ENCODE measurements at regions of chr17 and their contacts with region 1.

Region 1: DNA sequence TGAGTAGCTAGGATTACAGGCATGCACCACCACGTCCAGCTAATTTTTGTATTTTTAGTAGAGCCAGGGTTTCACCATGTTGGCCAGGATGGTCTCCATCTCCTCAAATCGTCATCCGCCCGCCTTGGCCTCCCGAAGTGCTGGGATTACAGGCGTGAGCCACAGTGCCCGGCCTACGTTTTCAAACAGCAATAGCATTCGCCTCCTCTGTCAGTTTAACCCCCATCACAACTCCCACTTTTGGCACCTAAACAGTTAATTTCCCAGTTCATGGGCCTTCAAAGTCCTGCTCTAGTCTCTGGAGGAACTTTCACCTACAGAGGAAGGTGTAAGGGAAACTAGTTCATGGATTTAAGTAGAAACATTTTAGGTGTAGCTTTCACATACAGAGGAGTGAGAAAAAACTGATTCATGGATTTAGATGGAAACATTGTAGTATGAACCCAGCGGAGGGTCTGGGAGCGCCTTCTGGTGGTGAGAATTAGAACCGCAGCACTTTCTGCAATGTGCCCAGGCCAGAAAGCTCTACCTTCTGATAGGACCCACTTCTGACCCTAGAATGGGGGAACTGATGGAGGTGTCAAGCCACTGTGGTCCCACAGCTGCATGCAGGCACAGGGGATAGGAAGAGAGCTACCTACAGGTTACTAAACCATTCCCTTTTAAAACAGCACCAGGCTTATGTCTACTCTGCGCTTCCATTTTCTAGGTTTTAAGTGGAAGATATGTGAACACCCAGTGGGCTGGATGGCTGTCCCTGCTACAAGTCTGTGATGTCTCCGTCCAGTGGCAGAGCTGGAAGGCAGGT is 12.0 kb upstream of the MEOX1 start:
- DNase-seq: peak; percentile 65
- H3K4me3 ChIP-seq: no peak overlapping the region
- H3K27ac ChIP-seq: no peak overlapping the region
- H3K4me1 ChIP-seq: peaks cover 14% of the 10 kb centered on the region
- CTCF ChIP-seq: peak; percentile 91

Region 2: DNA sequence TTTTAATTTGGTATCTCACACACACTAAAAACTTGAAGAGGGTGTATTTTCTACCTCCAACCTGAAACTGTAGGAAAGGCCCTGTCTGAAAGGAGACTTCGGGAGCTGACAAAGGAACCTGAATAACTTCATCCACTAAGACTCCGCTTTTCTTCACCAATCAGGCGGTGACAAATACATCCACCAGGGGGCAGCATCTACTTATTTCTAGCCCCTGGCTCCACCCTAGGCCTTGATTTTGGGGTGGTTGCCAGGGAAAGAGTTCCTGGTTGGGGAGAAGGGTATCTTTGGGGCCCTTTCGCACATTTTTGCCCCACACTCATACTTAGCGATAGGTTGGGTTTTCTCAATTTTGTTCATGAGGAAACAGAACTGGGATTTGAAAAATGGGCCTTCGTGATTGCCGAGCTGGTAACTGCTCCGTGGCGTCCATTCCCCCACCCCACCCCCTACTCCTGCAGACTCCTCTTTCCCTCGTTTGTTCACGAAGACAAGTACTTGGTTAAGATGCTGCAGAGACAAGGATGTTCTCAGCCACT is 279.7 kb before region 1 on chr17:
- CTCF ChIA-PET with region 1: no interaction called
- POLR2A ChIA-PET with region 1: no interaction called
- intact Hi-C with region 1: loop called (anchors 5 kb)
- DNase-seq: peak; percentile 86
- H3K4me3 ChIP-seq: no peak overlapping the region
- H3K27ac ChIP-seq: no peak overlapping the region
- H3K4me1 ChIP-seq: peaks cover 18% of the 10 kb centered on the region
- CTCF ChIP-seq: peak; percentile 94